CD4-positive, alpha-beta T cell (primary cell): ENCODE measurements at regions of chr11 and their contacts with region 1.

Region 1: GRCh38 chr11:114180301-114181055 is 115.7 kb upstream of the NNMT start:
- DNase-seq: peak in 3 of 14 experiments; percentile 47 to 51 (median 50)
- ATAC-seq: no peak
- H3K4me3 ChIP-seq: no peak overlapping the region
- H3K4me3 Mint-ChIP-seq: peak overlapping the region; percentile 39
- H3K27ac ChIP-seq: no peak overlapping the region
- H3K27ac Mint-ChIP-seq: peak overlapping the region; percentile 91
- H3K4me1 ChIP-seq: peaks cover 71% of the 10 kb centered on the region
- H3K4me1 Mint-ChIP-seq: peaks cover 93% of the 10 kb centered on the region
- H3K27me3 ChIP-seq: no peaks in the 10 kb centered on the region
- H3K27me3 Mint-ChIP-seq: no peaks in the 10 kb centered on the region
- CTCF ChIP-seq: peak; percentile 19

Region 2: GRCh38 chr11:114121804-114122504 is 58.5 kb before region 1 on chr11:
- CTCF ChIA-PET with region 1: no interaction called
- POLR2A ChIA-PET with region 1: no interaction called
- intact Hi-C with region 1: loop called in 1 of 2 experiments (anchors 10 kb)
- DNase-seq: no peak
- ATAC-seq: no peak
- H3K4me3 ChIP-seq: no peak overlapping the region
- H3K4me3 Mint-ChIP-seq: no peak overlapping the region
- H3K27ac ChIP-seq: no peak overlapping the region
- H3K27ac Mint-ChIP-seq: no peak overlapping the region
- H3K4me1 ChIP-seq: no peaks in the 10 kb centered on the region
- H3K4me1 Mint-ChIP-seq: peaks cover 11% of the 10 kb centered on the region
- H3K27me3 ChIP-seq: no peaks in the 10 kb centered on the region
- H3K27me3 Mint-ChIP-seq: peaks cover 9% of the 10 kb centered on the region
- CTCF ChIP-seq: no peak

Region 3: GRCh38 chr11:114166897-114167323 is 13.6 kb before region 1 on chr11:
- CTCF ChIA-PET with region 1: interaction called, 5 read pairs
- POLR2A ChIA-PET with region 1: interaction called, 67 read pairs
- intact Hi-C with region 1: no loop called
- DNase-seq: peak in 4 of 14 experiments; percentile 53 to 77 (median 64)
- ATAC-seq: peak; percentile 62
- H3K4me3 ChIP-seq: no peak overlapping the region
- H3K4me3 Mint-ChIP-seq: peak overlapping the region; percentile 63
- H3K27ac ChIP-seq: no peak overlapping the region
- H3K27ac Mint-ChIP-seq: peak overlapping the region; percentile 63
- H3K4me1 ChIP-seq: peaks cover 89% of the 10 kb centered on the region
- H3K4me1 Mint-ChIP-seq: peaks cover 98% of the 10 kb centered on the region
- H3K27me3 ChIP-seq: no peaks in the 10 kb centered on the region
- H3K27me3 Mint-ChIP-seq: no peaks in the 10 kb centered on the region
- CTCF ChIP-seq: no peak

Region 4: DNA sequence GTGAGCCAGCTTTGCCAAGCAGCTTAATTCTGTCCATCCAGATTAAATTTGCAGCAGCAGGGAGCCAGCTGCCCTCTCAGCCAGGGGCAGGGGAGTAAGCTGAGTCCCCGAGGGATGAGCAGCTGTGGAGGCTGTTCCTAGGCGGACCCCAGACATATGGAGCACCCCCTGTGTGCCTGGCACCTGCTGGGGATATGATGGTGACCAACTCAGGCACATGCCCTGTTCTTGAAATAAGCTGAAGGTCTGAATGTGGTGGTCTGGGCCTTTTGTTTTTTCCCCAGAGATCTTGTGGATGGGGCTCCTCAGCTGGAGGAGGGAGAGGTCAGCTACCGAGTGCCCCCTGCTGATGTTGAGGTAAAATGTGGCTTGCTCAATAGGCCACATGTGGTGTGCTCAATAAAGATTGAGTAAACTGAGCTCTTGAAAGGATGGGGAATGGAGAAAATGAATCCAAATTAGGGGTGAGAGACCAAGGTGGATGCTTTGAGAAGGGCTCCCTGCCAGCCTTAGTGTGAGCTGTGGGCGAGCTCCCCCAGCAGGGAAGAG is 12.4 kb after region 1 on chr11:
- CTCF ChIA-PET with region 1: interaction called, 4 read pairs
- POLR2A ChIA-PET with region 1: interaction called, 31 read pairs
- intact Hi-C with region 1: no loop called
- DNase-seq: peak in 2 of 14 experiments; percentile 26 to 27
- ATAC-seq: no peak
- H3K4me3 ChIP-seq: no peak overlapping the region
- H3K4me3 Mint-ChIP-seq: no peak overlapping the region
- H3K27ac ChIP-seq: no peak overlapping the region
- H3K27ac Mint-ChIP-seq: no peak overlapping the region
- H3K4me1 ChIP-seq: peaks cover 19% of the 10 kb centered on the region
- H3K4me1 Mint-ChIP-seq: peaks cover 47% of the 10 kb centered on the region
- H3K27me3 ChIP-seq: no peaks in the 10 kb centered on the region
- H3K27me3 Mint-ChIP-seq: no peaks in the 10 kb centered on the region
- CTCF ChIP-seq: no peak

Region 5: GRCh38 chr11:114340311-114341131 is 160.0 kb after region 1 on chr11:
- CTCF ChIA-PET with region 1: no interaction called
- POLR2A ChIA-PET with region 1: no interaction called
- intact Hi-C with region 1: no loop called
- DNase-seq: peak in 8 of 14 experiments; percentile 7 to 72 (median 28)
- ATAC-seq: peak; percentile 58
- H3K4me3 ChIP-seq: peak overlapping the region; percentile 40
- H3K4me3 Mint-ChIP-seq: peak overlapping the region; percentile 64
- H3K27ac ChIP-seq: no peak overlapping the region
- H3K27ac Mint-ChIP-seq: no peak overlapping the region
- H3K4me1 ChIP-seq: peaks cover 9% of the 10 kb centered on the region
- H3K4me1 Mint-ChIP-seq: peaks cover 13% of the 10 kb centered on the region
- H3K27me3 ChIP-seq: peaks cover 0 to 2% of the 10 kb centered on the region in 2 experiments
- H3K27me3 Mint-ChIP-seq: peaks cover 4% of the 10 kb centered on the region
- CTCF ChIP-seq: peak; percentile 78